Mammary epithelial cell (primary cell): ENCODE measurements at regions of chr12 and their contacts with region 1.

Region 1: GRCh38 chr12:75747572-75748021 is 236.2 kb upstream of the KRR1 start:
- DNase-seq: peak; percentile 84
- H3K4me3 ChIP-seq: no peak overlapping the region
- H3K27ac ChIP-seq: peak overlapping the region; percentile 69
- H3K4me1 ChIP-seq: peaks cover 26% of the 10 kb centered on the region
- H3K27me3 ChIP-seq: no peaks in the 10 kb centered on the region
- CTCF ChIP-seq: no peak

Region 2: DNA sequence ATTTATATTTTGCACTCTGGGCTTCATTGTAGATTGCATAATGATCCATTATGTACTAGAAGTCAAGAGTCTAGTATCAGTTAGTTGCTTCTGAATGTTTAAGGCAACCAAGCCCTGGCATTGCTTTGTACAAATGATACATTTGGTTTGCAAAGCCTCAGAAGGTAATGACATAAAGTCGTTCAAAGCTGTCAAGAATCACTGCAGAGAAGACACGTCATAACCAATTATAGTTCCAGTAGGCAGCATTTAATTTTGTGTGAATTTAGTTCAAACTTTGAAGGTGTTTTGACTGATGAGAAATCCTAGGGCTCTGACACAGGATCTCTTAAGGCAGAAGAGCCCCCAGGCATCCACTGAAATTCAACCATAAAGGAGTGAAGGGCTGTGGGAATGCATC is 73.2 kb before region 1 on chr12:
- CTCF ChIA-PET with region 1: no interaction called
- dilution Hi-C with region 1: no loop called
- in situ Hi-C with region 1: no loop called
- intact Hi-C with region 1: no loop called
- DNase-seq: no peak
- H3K4me3 ChIP-seq: no peak overlapping the region
- H3K27ac ChIP-seq: no peak overlapping the region
- H3K4me1 ChIP-seq: no peaks in the 10 kb centered on the region
- H3K27me3 ChIP-seq: no peaks in the 10 kb centered on the region
- CTCF ChIP-seq: no peak

Region 3: DNA sequence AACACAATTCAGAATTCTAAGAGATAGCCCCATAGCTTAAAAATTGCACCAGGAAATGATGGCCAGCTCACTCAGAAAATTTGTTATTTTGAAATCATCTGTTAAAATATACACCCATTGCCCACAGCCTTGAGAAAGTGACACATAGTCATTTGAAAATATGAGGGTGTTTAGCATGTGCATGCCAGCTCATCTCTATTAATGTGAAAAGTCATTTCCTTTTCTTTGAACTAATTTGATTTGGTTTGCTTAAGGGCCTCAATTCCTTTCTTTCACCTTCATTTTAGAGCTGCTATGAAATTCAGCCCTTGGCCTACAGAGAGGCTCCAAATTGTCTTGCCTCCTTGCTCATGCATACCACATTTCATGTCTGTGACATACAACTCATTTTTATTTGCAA is 42.6 kb after region 1 on chr12:
- CTCF ChIA-PET with region 1: no interaction called
- dilution Hi-C with region 1: no loop called
- in situ Hi-C with region 1: no loop called
- intact Hi-C with region 1: loop called (anchors 5 kb)
- DNase-seq: peak; percentile 79
- H3K4me3 ChIP-seq: no peak overlapping the region
- H3K27ac ChIP-seq: peak overlapping the region; percentile 73
- H3K4me1 ChIP-seq: peaks cover 28% of the 10 kb centered on the region
- H3K27me3 ChIP-seq: no peaks in the 10 kb centered on the region
- CTCF ChIP-seq: no peak